HEK293 (cell line): ENCODE measurements at regions of chr9 and their contacts with region 1.

Region 1: GRCh38 chr9:130243015-130243734 is 22.4 kb upstream of the HMCN2 start:
- H3K4me3 ChIP-seq: no peak overlapping the region
- H3K27ac ChIP-seq: no peak overlapping the region
- H3K4me1 ChIP-seq: 0 out of 2 replicates have a peak, but pooled peaks cover 3% of the 10 kb centered on the region
- CTCF ChIP-seq: peak; percentile 80

Region 2: GRCh38 chr9:130118841-130119518 is 124.2 kb before region 1 on chr9:
- CTCF ChIA-PET with region 1: interaction called, 217 read pairs
- POLR2A ChIA-PET with region 1: no interaction called
- H3K4me3 ChIP-seq: no peak overlapping the region
- H3K27ac ChIP-seq: 0 out of 2 replicates have a peak overlapping the region, but pooled peaks have one; percentile 41
- H3K4me1 ChIP-seq: peaks cover 8% of the 10 kb centered on the region; the same call in 1 of the 2 replicates
- CTCF ChIP-seq: no peak

Region 3: GRCh38 chr9:130254752-130255630 is 11.8 kb after region 1 on chr9:
- CTCF ChIA-PET with region 1: interaction called, 62 read pairs
- POLR2A ChIA-PET with region 1: interaction called, 3 read pairs
- H3K4me3 ChIP-seq: no peak overlapping the region
- H3K27ac ChIP-seq: no peak overlapping the region
- H3K4me1 ChIP-seq: no peaks in the 10 kb centered on the region
- CTCF ChIP-seq: no peak

Region 4: DNA sequence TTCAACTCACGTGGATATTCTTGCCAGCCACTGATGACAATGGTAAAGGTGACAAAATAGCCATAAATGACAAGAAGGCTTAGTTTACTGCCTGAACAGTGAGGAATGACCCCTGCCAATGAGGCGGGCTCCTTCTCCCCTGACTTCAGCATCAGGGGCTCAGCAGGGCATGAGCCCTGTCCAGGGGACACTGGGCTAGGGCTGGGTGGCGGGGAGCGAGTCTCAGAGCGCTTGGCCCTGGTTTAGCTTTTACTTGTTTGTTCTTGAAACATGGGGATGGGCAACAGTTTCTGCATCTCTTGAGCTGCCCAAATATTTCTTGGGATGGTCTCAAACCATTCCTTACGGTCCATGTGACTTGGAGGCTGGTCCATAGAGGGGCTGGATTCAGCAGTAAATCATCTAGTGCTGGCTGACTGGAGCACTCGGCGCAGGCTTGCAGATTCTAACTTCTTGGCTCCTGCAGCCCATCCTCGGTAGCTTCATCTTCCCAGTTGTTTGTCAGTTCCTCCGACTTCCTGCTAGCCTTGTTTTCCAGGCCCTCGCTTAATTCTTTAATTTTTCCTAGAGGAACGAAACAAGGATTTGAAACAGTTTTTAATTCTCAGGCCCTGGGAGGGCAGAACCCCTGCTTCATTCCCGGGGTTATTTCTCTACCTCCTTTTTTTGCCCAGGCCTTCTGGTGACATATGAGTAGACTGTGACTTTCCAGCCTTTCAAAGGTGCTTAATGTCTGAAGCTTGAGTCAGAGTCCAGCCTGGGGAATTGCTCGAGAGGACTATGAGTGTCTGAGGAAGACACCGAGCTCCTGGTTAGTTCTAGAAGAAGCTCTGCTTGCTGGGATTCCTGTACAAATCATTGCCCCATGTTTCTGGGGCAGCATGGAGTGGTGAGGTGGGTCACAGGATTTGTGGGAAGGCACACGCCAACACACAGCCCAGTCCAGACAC is 17.9 kb after region 1 on chr9:
- CTCF ChIA-PET with region 1: interaction called, 17 read pairs
- POLR2A ChIA-PET with region 1: no interaction called
- H3K4me3 ChIP-seq: no peak overlapping the region
- H3K27ac ChIP-seq: no peak overlapping the region
- H3K4me1 ChIP-seq: no peaks in the 10 kb centered on the region
- CTCF ChIP-seq: no peak

Region 5: DNA sequence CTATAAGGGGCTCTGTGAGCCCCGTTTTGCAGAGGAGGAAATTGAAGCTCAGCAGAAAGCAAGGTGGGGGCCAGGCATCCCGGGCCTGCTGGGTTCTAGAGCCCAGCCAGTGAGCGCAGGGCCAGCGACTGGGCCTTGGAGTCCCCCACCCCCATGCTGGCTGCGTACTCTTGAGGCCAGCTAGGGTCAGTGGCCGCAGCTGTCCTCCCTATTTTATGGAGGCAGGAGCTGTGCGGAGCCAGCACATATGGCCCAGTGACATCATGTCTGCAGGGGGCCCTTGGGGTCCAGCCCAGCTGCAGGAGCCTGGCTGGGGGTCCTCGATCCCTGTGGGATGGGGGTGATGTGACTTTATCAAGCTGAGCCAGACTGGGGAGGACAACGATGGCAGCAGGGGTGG is 93.7 kb after region 1 on chr9:
- CTCF ChIA-PET with region 1: interaction called, 20 read pairs
- POLR2A ChIA-PET with region 1: no interaction called
- H3K4me3 ChIP-seq: no peak overlapping the region
- H3K27ac ChIP-seq: no peak overlapping the region
- H3K4me1 ChIP-seq: no peaks in the 10 kb centered on the region
- CTCF ChIP-seq: no peak

Region 6: GRCh38 chr9:130343445-130343918 is 100.3 kb after region 1 on chr9:
- CTCF ChIA-PET with region 1: interaction called, 20 read pairs
- POLR2A ChIA-PET with region 1: no interaction called
- H3K4me3 ChIP-seq: no peak overlapping the region
- H3K27ac ChIP-seq: no peak overlapping the region
- H3K4me1 ChIP-seq: no peaks in the 10 kb centered on the region
- CTCF ChIP-seq: peak; percentile 75